CD14-positive monocyte (primary cell): ENCODE measurements at regions of chr11 and their contacts with region 1.

Region 1: DNA sequence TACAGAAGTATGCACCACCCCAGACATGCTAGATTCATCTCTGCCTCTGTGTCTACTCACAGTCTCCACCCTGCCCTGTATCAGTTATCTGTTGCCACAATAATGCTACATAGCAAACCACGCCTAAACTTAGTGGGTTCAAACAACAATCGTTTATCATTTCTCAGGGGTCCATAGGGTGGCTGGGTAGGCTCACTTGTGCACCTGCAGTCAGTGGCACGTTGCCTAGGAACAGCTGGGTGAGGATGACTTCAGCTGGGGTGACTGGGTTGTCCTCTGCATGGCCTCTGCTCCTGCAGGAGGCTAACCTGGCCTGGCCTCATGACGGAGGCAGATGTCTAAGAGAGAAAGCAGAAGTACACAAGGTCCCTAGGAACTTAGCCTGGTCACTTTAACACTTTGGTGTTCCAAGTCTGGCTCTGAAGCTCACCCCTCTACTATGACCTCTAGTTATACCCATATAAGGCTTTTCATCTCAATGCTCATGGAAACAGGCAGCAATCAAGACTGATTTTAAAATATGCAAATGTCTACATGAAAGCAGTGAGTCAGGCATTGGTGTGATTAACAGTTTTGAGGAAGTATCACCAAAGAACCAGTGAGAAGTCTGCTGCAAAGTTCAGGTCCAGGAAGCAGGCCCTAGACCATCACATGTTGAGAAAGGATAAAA is 10.7 kb downstream of the OLFML1 start:
- DNase-seq: peak; percentile 81 to 92 (median 91)
- H3K4me3 ChIP-seq: no peak overlapping the region
- H3K4me3 Mint-ChIP-seq: peak overlapping the region in 1 of 2 donors; percentile 9
- H3K27ac ChIP-seq: peak overlapping the region; percentile 23 to 71
- H3K27ac Mint-ChIP-seq: peak overlapping the region; percentile 73 to 94 (median 87)
- H3K4me1 ChIP-seq: peaks cover 34 to 36% of the 10 kb centered on the region in 2 donors
- H3K4me1 Mint-ChIP-seq: peaks cover 33% of the 10 kb centered on the region
- H3K27me3 ChIP-seq: no peaks in the 10 kb centered on the region
- H3K27me3 Mint-ChIP-seq: peaks cover 0 to 3% (median 3%) of the 10 kb centered on the region in 3 donors
- CTCF ChIP-seq: no peak

Region 2: GRCh38 chr11:7422544-7423331 is 73.3 kb before region 1 on chr11:
- intact Hi-C with region 1: no loop called
- DNase-seq: no peak
- H3K4me3 ChIP-seq: no peak overlapping the region
- H3K4me3 Mint-ChIP-seq: no peak overlapping the region
- H3K27ac ChIP-seq: no peak overlapping the region
- H3K27ac Mint-ChIP-seq: peak overlapping the region in 1 of 7 donors; percentile 25
- H3K4me1 ChIP-seq: no peaks in the 10 kb centered on the region
- H3K4me1 Mint-ChIP-seq: peaks cover 2% of the 10 kb centered on the region
- H3K27me3 ChIP-seq: peaks cover 2 to 3% of the 10 kb centered on the region in 2 donors
- H3K27me3 Mint-ChIP-seq: peaks cover 0 to 9% (median 4%) of the 10 kb centered on the region in 3 donors
- CTCF ChIP-seq: no peak

Region 3: DNA sequence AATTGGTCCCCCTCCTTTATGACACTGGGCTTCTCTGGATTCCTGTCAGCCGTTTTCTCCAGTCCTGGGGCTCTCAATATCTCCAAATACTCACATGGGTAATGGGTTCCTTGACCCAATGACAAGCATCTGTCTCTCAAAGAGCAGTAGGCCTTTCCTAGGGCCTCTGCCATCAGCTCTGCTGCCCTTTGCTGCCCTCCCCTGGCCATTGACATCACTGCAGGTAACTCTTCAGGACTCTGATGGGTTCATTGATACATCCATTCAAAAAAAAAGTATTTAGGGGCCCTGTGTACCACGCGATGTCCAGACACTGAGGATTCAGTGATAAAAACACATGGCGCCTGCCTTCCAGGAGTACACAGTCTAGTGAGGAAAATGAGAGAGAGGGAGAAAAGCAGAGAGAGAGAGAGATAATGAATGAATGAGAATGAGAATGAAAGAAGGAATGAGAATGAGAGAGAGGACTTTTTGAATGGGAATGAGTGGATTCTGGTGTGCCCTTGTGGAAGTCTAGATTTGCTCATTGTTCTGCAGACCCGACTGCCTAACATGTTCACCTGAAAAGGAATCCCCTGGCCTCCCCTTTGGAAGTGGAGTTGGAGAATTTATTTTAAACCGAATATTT is 53.3 kb before region 1 on chr11:
- intact Hi-C with region 1: no loop called
- DNase-seq: peak; percentile 45 to 67 (median 56)
- H3K4me3 ChIP-seq: no peak overlapping the region
- H3K4me3 Mint-ChIP-seq: no peak overlapping the region
- H3K27ac ChIP-seq: no peak overlapping the region
- H3K27ac Mint-ChIP-seq: no peak overlapping the region
- H3K4me1 ChIP-seq: peaks cover 18 to 24% of the 10 kb centered on the region in 2 donors
- H3K4me1 Mint-ChIP-seq: peaks cover 26% of the 10 kb centered on the region
- H3K27me3 ChIP-seq: no peaks in the 10 kb centered on the region
- H3K27me3 Mint-ChIP-seq: peaks cover 2 to 13% (median 4%) of the 10 kb centered on the region in 3 donors
- CTCF ChIP-seq: peak; percentile 89

Region 4: DNA sequence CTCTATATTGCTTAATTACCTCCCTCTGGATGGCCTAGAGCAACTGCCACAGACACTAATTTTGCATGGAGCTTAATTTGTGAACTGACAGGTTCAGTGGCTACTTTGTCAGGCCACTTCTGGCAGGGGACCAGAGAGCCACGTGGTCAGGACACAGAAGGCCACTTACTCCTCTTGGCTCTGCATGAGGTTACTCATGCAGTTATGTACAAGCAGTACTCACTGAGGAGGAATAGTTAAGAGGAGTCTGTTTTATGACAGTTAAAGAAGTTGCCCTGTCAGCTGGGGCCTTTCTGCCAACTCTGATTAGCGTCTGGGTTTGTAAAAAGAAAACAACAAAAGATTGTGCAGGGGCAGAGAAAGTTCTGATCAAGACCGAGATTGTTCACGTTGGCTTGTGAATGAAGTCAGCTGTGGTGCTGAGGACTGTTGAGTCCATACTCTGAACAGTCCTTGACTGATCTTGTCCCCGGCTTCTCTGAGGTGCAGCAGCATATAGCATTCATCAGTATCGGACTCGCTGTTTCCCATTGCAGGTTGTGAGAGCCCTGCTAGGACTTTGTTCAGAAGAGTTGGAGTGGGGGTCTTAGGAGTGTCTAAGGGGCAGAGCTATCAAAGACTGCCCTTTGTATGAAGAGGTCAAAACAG is 59.2 kb after region 1 on chr11:
- intact Hi-C with region 1: no loop called
- DNase-seq: no peak
- H3K4me3 ChIP-seq: no peak overlapping the region
- H3K4me3 Mint-ChIP-seq: no peak overlapping the region
- H3K27ac ChIP-seq: no peak overlapping the region
- H3K27ac Mint-ChIP-seq: no peak overlapping the region
- H3K4me1 ChIP-seq: no peaks in the 10 kb centered on the region
- H3K4me1 Mint-ChIP-seq: no peaks in the 10 kb centered on the region
- H3K27me3 ChIP-seq: no peaks in the 10 kb centered on the region
- H3K27me3 Mint-ChIP-seq: peaks cover 0 to 6% (median 6%) of the 10 kb centered on the region in 3 donors
- CTCF ChIP-seq: no peak

Region 5: DNA sequence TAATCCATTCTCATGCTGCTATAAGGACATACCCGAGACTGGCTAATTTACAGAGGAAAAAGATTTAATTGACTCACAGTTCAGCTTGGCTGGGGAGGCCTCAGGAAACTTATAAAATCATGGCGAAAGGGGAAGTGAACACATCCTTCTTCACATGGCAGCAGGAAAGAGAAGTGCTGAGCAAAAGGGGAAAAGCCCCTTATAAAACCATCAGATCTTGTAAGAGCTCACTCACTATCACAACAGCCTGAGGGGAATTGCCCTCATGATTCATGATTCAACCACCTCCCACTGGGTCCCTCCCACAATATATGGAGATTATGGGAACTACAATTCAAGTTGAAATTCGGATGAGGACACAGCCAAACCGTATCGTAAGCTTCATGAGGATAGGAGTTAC is 181.1 kb after region 1 on chr11:
- intact Hi-C with region 1: loop called in 1 of 2 experiments (anchors 5 kb)
- DNase-seq: peak; percentile 65 to 90 (median 70)
- H3K4me3 ChIP-seq: no peak overlapping the region
- H3K4me3 Mint-ChIP-seq: no peak overlapping the region
- H3K27ac ChIP-seq: peak overlapping the region in 1 of 2 donors; percentile 63
- H3K27ac Mint-ChIP-seq: peak overlapping the region in 5 of 7 donors; percentile 36 to 63 (median 54)
- H3K4me1 ChIP-seq: peaks cover 12 to 18% of the 10 kb centered on the region in 2 donors
- H3K4me1 Mint-ChIP-seq: peaks cover 28% of the 10 kb centered on the region
- H3K27me3 ChIP-seq: peaks cover 28 to 42% of the 10 kb centered on the region in 2 donors
- H3K27me3 Mint-ChIP-seq: peaks cover 42 to 71% (median 46%) of the 10 kb centered on the region in 3 donors
- CTCF ChIP-seq: no peak